Activated CD4-positive, alpha-beta memory T cell treated with anti-CD3 and anti-CD28 coated beads for 36 hours (primary cell): ENCODE measurements at regions of chr1 and their contacts with region 1.

Region 1: DNA sequence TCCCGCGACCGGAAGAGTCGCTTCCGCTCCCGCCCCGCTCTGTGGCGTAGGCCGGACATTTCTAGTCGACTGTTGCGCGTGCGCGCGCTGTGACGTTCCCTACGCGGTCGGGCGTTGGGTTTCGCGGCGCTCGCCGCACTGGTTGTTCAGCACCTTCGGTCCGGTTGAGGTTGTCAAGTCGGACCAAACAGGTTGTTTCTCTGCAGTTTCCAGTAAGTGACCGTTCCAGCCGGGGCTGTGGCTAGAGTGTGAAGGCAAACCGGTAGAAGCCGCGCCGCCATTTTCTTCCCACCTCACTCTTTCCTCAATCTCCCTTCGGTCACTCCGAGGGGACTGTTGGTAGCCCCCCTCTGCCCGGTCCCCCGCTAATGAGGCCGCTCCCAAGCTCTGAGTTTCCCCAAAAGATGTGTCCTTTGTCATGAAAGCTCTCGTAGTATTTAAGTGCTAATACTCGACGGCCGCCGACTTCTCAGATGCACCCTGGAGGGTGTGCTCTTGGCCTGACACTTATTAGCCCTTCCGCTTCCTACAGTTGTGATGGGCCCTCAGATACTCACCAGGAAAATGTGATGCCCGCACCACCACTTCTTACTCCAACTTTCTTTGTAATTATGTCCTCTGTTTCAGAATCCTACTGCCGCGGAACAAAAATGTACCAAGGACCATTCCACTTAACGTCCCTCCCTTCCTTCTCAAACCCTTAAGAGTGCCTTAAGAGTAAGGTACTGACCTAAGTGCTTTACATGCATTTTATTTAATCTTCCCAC is 56.3 kb downstream of the TRAF5 start:
- DNase-seq: peak; percentile 88
- H3K4me3 Mint-ChIP-seq: peak overlapping the region; percentile 78
- H3K27ac Mint-ChIP-seq: peak overlapping the region; percentile 88
- H3K4me1 Mint-ChIP-seq: peaks cover 42% of the 10 kb centered on the region
- H3K27me3 Mint-ChIP-seq: no peaks in the 10 kb centered on the region

Region 2: GRCh38 chr1:211236633-211237320 is 146.1 kb before region 1 on chr1:
- CTCF ChIA-PET with region 1: no interaction called
- POLR2A ChIA-PET with region 1: no interaction called
- intact Hi-C with region 1: no loop called
- DNase-seq: no peak
- H3K4me3 Mint-ChIP-seq: no peak overlapping the region
- H3K27ac Mint-ChIP-seq: no peak overlapping the region
- H3K4me1 Mint-ChIP-seq: no peaks in the 10 kb centered on the region
- H3K27me3 Mint-ChIP-seq: no peaks in the 10 kb centered on the region

Region 3: GRCh38 chr1:211258756-211259637 is 123.9 kb before region 1 on chr1 and contains the start of gene RCOR3:
- CTCF ChIA-PET with region 1: no interaction called
- POLR2A ChIA-PET with region 1: no interaction called
- intact Hi-C with region 1: loop called (anchors 2 kb)
- DNase-seq: peak; percentile 95
- H3K4me3 Mint-ChIP-seq: peak within 1 kb of the TSS; percentile 83
- H3K27ac Mint-ChIP-seq: peak within 1 kb of the TSS; percentile 93
- H3K4me1 Mint-ChIP-seq: peaks cover 16% of the 10 kb centered on the region
- H3K27me3 Mint-ChIP-seq: no peaks in the 10 kb centered on the region
- total RNA-seq, gene RCOR3: 30.2 to 32.7 TPM

Region 4: DNA sequence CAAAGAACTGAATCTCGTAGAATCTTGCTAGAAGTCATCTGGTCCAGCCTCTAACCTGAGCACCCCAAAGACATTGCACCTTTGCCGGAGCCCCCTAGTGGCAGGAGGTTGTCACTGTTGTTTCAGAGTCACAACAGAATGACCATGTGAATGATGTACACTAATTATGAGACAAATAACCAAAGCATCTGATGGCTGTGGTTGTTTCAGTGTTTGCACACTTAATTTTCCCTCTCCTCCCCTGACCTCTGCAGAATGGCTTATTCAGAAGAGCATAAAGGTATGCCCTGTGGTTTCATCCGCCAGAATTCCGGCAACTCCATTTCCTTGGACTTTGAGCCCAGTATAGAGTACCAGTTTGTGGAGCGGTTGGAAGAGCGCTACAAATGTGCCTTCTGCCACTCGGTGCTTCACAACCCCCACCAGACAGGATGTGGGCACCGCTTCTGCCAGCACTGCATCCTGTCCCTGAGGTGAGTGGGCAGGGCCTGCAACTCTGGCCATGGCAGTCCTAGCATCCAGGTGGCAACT is 29.8 kb before region 1 on chr1:
- CTCF ChIA-PET with region 1: no interaction called
- POLR2A ChIA-PET with region 1: no interaction called
- intact Hi-C with region 1: loop called (anchors 2 kb)
- DNase-seq: peak; percentile 75
- H3K4me3 Mint-ChIP-seq: peak overlapping the region; percentile 16
- H3K27ac Mint-ChIP-seq: peak overlapping the region; percentile 88
- H3K4me1 Mint-ChIP-seq: peaks cover 79% of the 10 kb centered on the region
- H3K27me3 Mint-ChIP-seq: no peaks in the 10 kb centered on the region

Region 5: GRCh38 chr1:211420389-211420788 is 37.5 kb after region 1 on chr1:
- CTCF ChIA-PET with region 1: interaction called, 4 read pairs
- POLR2A ChIA-PET with region 1: interaction called, 4 read pairs
- intact Hi-C with region 1: loop called (anchors 2 kb)
- DNase-seq: peak; percentile 36
- H3K4me3 Mint-ChIP-seq: no peak overlapping the region
- H3K27ac Mint-ChIP-seq: no peak overlapping the region
- H3K4me1 Mint-ChIP-seq: peaks cover 19% of the 10 kb centered on the region
- H3K27me3 Mint-ChIP-seq: no peaks in the 10 kb centered on the region

Region 6: DNA sequence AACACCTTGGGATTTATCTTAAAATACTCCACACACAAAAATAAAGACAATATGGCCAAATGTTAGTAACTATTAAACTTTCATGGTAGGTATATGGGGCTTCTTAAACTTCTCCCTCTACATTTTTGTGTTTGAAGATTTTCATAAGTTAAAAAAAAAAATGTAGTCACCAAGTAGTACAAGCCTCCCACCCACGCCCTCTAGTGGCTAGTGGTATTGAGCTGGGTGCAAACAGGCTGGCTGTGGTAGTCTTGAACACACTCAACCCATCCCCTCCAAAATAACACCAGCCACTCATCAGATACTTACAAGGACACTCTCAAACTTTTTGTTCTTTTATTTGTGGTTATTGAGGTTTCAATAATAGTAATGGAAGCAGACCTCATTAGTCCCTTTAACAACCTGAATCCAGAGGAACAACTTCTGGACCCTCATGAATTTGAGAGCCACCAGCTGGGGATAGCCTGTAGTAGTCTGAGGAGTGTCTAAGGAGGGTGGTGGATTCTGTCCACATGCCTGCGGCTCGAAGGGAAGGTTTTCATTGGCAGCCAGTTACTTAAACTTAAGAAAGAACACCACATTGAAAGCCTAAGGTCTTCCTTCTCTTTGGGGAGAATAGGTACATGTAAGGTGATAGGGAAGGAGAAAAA is 93.4 kb after region 1 on chr1:
- CTCF ChIA-PET with region 1: interaction called, 5 read pairs
- POLR2A ChIA-PET with region 1: no interaction called
- intact Hi-C with region 1: loop called (anchors 1 kb)
- DNase-seq: peak; percentile 84
- H3K4me3 Mint-ChIP-seq: no peak overlapping the region
- H3K27ac Mint-ChIP-seq: no peak overlapping the region
- H3K4me1 Mint-ChIP-seq: no peaks in the 10 kb centered on the region
- H3K27me3 Mint-ChIP-seq: peaks cover 15% of the 10 kb centered on the region

Region 7: GRCh38 chr1:211557894-211558625 is 175.2 kb after region 1 on chr1:
- CTCF ChIA-PET with region 1: no interaction called
- POLR2A ChIA-PET with region 1: no interaction called
- intact Hi-C with region 1: no loop called
- DNase-seq: no peak
- H3K4me3 Mint-ChIP-seq: no peak overlapping the region
- H3K27ac Mint-ChIP-seq: no peak overlapping the region
- H3K4me1 Mint-ChIP-seq: no peaks in the 10 kb centered on the region
- H3K27me3 Mint-ChIP-seq: peaks cover 1% of the 10 kb centered on the region

Region 8: DNA sequence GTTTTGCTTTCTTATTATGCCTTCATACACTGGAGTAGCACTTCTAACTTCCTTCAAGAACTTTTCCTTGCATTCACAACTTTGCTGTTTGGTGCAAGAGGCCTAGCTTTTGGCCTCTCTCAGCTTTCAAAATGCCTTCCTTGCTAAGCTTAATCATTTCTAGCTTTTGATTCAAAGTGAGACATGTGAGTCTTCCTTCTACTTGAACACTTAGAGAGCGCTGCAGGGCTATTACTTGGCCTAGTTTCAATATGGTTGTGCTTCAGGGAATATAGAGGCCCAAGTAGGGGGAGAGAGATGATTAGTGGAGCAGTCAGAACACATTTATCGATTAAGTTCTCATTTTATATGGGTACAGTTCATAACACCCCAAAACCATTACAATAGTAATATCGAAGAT is 1620.4 kb after region 1 on chr1:
- CTCF ChIA-PET with region 1: interaction called, 3 read pairs
- POLR2A ChIA-PET with region 1: no interaction called
- intact Hi-C with region 1: loop called (anchors 2 kb)
- DNase-seq: peak; percentile 48
- H3K4me3 Mint-ChIP-seq: no peak overlapping the region
- H3K27ac Mint-ChIP-seq: peak overlapping the region; percentile 57
- H3K4me1 Mint-ChIP-seq: peaks cover 13% of the 10 kb centered on the region
- H3K27me3 Mint-ChIP-seq: no peaks in the 10 kb centered on the region